Activated naive CD4-positive, alpha-beta T cell treated with anti-CD3 and anti-CD28 coated beads for 36 hours (primary cell): ENCODE measurements at regions of chr14 and their contacts with region 1.

Region 1: GRCh38 chr14:91350813-91351511 is 66.7 kb downstream of the CCDC88C start:
- DNase-seq: peak; percentile 82
- H3K4me3 Mint-ChIP-seq: peak overlapping the region; percentile 69
- H3K27ac Mint-ChIP-seq: peak overlapping the region; percentile 95
- H3K4me1 Mint-ChIP-seq: peaks cover 93% of the 10 kb centered on the region
- H3K27me3 Mint-ChIP-seq: no peaks in the 10 kb centered on the region

Region 2: GRCh38 chr14:91303091-91303923 is 47.7 kb before region 1 on chr14:
- CTCF ChIA-PET with region 1: no interaction called
- intact Hi-C with region 1: loop called (anchors 1 kb)
- DNase-seq: peak; percentile 89
- H3K4me3 Mint-ChIP-seq: no peak overlapping the region
- H3K27ac Mint-ChIP-seq: peak overlapping the region; percentile 93
- H3K4me1 Mint-ChIP-seq: peaks cover 58% of the 10 kb centered on the region
- H3K27me3 Mint-ChIP-seq: no peaks in the 10 kb centered on the region

Region 3: GRCh38 chr14:91323671-91324605 is 27.0 kb before region 1 on chr14:
- CTCF ChIA-PET with region 1: interaction called, 17 read pairs
- intact Hi-C with region 1: loop called (anchors 1 kb)
- DNase-seq: peak; percentile 99
- H3K4me3 Mint-ChIP-seq: peak overlapping the region; percentile 83
- H3K27ac Mint-ChIP-seq: peak overlapping the region; percentile 99
- H3K4me1 Mint-ChIP-seq: peaks cover 79% of the 10 kb centered on the region
- H3K27me3 Mint-ChIP-seq: no peaks in the 10 kb centered on the region

Region 4: GRCh38 chr14:91373591-91374254 is 22.8 kb after region 1 on chr14:
- CTCF ChIA-PET with region 1: interaction called, 47 read pairs
- intact Hi-C with region 1: loop called (anchors 1 kb)
- DNase-seq: peak; percentile 83
- H3K4me3 Mint-ChIP-seq: peak overlapping the region; percentile 58
- H3K27ac Mint-ChIP-seq: peak overlapping the region; percentile 93
- H3K4me1 Mint-ChIP-seq: peaks cover 99% of the 10 kb centered on the region
- H3K27me3 Mint-ChIP-seq: no peaks in the 10 kb centered on the region

Region 5: DNA sequence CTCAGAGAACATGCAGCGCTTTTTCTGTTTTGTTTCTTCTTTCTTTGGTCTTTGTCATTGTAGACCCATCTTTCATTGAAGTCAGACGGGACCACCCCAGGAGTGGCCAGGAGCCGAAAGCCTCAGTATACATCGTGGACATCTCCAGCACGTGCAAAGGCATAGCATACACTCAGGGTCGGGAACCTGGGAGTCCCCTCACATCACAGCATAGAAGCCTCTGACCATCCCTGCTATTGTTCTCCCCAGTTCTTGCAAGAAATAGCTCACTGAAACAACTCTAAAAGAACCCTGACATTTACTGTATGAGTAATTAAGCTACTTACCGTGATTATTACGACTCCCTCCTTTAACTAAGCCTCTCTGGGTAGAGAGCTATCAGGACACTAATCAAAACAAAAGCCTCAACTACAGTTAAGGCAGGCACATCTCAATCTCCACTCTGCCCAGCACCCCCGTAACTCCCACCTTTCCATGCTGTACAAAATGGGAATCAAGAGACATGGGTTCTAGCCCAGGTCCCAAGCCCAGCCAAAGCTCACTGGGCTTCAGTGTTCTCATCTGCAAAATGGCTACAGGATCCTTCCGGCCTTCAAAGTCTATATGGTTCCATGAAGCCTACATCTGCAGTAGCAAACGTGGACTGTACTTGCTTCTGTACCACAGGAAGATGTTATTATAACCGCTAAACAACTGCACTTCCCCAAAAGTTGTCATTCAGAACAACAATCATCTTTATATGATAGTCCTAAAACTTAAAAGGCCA is 60.0 kb after region 1 on chr14:
- CTCF ChIA-PET with region 1: interaction called, 68 read pairs
- intact Hi-C with region 1: loop called (anchors 1 kb)
- DNase-seq: peak; percentile 62
- H3K4me3 Mint-ChIP-seq: peak overlapping the region; percentile 53
- H3K27ac Mint-ChIP-seq: peak overlapping the region; percentile 95
- H3K4me1 Mint-ChIP-seq: peaks cover 91% of the 10 kb centered on the region
- H3K27me3 Mint-ChIP-seq: no peaks in the 10 kb centered on the region

Region 6: DNA sequence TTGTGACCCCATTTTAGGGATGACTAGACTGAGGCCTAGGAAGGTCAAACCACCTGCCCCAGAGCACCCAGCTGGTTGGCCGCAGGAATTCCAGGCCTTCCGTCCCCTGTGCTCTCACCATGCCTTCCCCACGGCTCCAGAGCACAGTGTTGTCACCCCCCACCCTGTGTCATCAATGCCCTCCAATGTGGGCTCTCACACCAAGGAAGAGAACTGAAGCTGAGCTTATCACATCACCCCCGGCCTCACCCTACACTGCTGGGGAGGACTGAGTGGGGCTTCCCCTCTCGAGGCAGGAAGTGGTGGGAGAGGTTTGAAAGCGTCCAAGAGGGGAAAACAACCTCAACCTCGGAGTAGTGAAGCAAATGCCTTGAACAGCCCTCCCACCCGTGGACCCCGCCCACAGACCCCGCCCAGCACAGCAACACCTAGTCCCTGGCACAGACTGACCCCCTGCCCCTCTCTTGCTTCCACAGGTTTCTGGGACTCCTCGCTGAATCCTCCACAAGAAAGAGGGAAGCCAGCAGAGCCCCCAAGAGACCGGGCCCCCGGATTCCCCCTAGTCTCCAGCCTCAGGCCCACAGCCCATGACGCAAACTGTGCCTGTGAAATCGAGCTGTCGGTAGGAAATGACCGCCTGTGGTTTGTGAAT is 1300.3 kb after region 1 on chr14:
- CTCF ChIA-PET with region 1: no interaction called
- intact Hi-C with region 1: loop called (anchors 10 kb)
- DNase-seq: peak; percentile 93
- H3K4me3 Mint-ChIP-seq: peak overlapping the region; percentile 93
- H3K27ac Mint-ChIP-seq: peak overlapping the region; percentile 97
- H3K4me1 Mint-ChIP-seq: peaks cover 76% of the 10 kb centered on the region
- H3K27me3 Mint-ChIP-seq: no peaks in the 10 kb centered on the region